HEK293 (cell line): ENCODE measurements at regions of chr7 and their contacts with region 1.

Region 1: GRCh38 chr7:32803406-32804141 is 88.0 kb downstream of the KBTBD2 start:
- H3K4me3 ChIP-seq: no peak overlapping the region
- H3K27ac ChIP-seq: no peak overlapping the region
- H3K4me1 ChIP-seq: no peaks in the 10 kb centered on the region
- CTCF ChIP-seq: no peak

Region 2: GRCh38 chr7:33038639-33039038 is 235.1 kb after region 1 on chr7:
- CTCF ChIA-PET with region 1: no interaction called
- POLR2A ChIA-PET with region 1: no interaction called
- H3K4me3 ChIP-seq: no peak overlapping the region
- H3K27ac ChIP-seq: no peak overlapping the region
- H3K4me1 ChIP-seq: peaks cover 37% of the 10 kb centered on the region
- CTCF ChIP-seq: no peak

Region 3: DNA sequence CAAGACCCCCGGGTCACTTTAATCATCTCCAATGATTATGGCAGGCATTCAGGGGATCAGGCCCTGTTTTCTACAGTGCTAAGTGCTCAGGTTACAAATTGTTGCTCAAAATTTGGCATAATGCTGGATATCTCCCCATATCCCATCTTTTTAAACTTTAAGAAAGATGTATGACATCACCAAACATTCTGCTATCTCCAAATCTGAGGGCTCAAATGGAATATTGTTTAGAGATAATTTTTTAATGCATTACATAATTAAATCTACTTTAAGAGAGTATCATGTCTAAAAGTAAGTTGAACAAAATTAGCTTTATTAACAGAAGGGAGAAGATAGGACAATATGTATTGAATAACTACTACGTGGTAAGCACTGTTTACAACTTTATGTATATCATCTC is 245.1 kb after region 1 on chr7:
- CTCF ChIA-PET with region 1: interaction called, 13 read pairs
- POLR2A ChIA-PET with region 1: no interaction called
- H3K4me3 ChIP-seq: no peak overlapping the region
- H3K27ac ChIP-seq: no peak overlapping the region
- H3K4me1 ChIP-seq: peaks cover 19% of the 10 kb centered on the region
- CTCF ChIP-seq: no peak

Region 4: DNA sequence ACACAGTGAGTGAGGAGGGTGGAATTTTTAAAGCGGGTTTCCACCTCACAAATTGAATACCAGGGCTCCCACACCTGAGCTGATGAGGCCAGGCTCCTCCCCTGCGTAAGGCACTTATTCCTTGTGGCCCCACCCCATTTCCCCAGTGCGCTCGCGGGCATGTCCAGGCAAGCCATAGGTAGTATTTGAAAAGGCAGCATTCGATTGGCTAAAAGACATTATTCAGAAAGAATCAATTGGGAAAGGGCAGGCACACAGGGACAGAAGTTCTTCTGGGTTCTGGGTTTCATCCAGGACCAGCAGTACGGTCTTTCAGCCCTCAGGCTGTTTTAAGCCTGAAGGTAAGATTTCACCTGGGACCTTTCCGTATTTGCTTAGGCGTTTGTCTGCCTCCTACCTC is 548.1 kb after region 1 on chr7:
- CTCF ChIA-PET with region 1: no interaction called
- POLR2A ChIA-PET with region 1: no interaction called
- H3K4me3 ChIP-seq: no peak overlapping the region
- H3K27ac ChIP-seq: no peak overlapping the region
- H3K4me1 ChIP-seq: no peaks in the 10 kb centered on the region
- CTCF ChIP-seq: no peak